ENCODE measurements at regions of chrX and their contacts with region 1.

Region 1: DNA sequence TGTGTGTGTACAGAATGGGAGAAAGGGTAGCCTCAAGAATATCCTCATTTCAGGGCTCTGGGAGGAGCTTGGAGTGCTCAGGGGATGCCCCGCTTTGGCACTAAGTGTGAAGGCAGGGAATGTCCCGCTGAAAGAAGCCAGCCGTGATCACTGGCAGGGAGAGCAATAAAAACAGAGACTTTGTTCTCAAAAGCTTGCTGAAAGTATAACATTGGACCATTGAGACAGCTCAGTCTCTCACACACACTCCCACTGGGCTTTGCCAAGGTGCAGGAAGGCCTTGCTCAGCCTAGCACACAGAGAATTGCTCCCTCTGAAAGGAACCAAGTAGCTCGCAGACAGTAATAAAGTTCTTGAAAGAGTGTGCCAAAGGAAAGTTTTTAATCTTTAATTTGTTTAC is 143.8 kb upstream of the SLITRK2 start:
- DNase-seq: no peak
- ATAC-seq: no peak
- H3K4me3 ChIP-seq: no peak overlapping the region
- H3K27ac ChIP-seq: no peak overlapping the region
- H3K4me1 ChIP-seq: no peaks in the 10 kb centered on the region
- H3K27me3 ChIP-seq: no peaks in the 10 kb centered on the region
- CTCF ChIP-seq: no peak
- EP300 ChIP-seq: no peak
- POLR2A ChIP-seq: no peak
- RAD21 ChIP-seq: no peak

Region 2: GRCh38 chrX:145694050-145694449 is 20.2 kb after region 1 on chrX:
- CTCF ChIA-PET with region 1: no interaction called
- POLR2A ChIA-PET with region 1: no interaction called
- RAD21 ChIA-PET with region 1: no interaction called
- SMC1A ChIA-PET with region 1: no interaction called
- in situ Hi-C with region 1: no loop called
- intact Hi-C with region 1: loop called (anchors 2 kb)
- DNase-seq: no peak
- ATAC-seq: no peak
- H3K4me3 ChIP-seq: no peak overlapping the region
- H3K27ac ChIP-seq: no peak overlapping the region
- H3K4me1 ChIP-seq: no peaks in the 10 kb centered on the region
- H3K27me3 ChIP-seq: no peaks in the 10 kb centered on the region
- CTCF ChIP-seq: no peak
- EP300 ChIP-seq: no peak
- POLR2A ChIP-seq: no peak
- RAD21 ChIP-seq: no peak

Measured in GM12878 (cell line).